WTC11 (cell line): ENCODE measurements at regions of chr2 and their contacts with region 1.

Region 1: GRCh38 chr2:208175069-208175839 is 11.9 kb upstream of the CRYGA start:
- DNase-seq: peak; percentile 76
- ATAC-seq: peak; percentile 98
- H3K4me3 Mint-ChIP-seq: no peak overlapping the region
- H3K27ac Mint-ChIP-seq: no peak overlapping the region
- H3K4me1 Mint-ChIP-seq: peaks cover 17% of the 10 kb centered on the region
- H3K27me3 Mint-ChIP-seq: no peaks in the 10 kb centered on the region
- CTCF ChIP-seq: peak; percentile 71

Region 2: GRCh38 chr2:208125251-208125650 is 50.0 kb before region 1 on chr2:
- CTCF ChIA-PET with region 1: interaction called, 13 read pairs
- POLR2A ChIA-PET with region 1: no interaction called
- DNase-seq: no peak
- ATAC-seq: no peak
- H3K4me3 Mint-ChIP-seq: no peak overlapping the region
- H3K27ac Mint-ChIP-seq: no peak overlapping the region
- H3K4me1 Mint-ChIP-seq: peaks cover 17% of the 10 kb centered on the region
- H3K27me3 Mint-ChIP-seq: no peaks in the 10 kb centered on the region; the same call in 1 of the 2 replicates
- CTCF ChIP-seq: no peak

Region 3: DNA sequence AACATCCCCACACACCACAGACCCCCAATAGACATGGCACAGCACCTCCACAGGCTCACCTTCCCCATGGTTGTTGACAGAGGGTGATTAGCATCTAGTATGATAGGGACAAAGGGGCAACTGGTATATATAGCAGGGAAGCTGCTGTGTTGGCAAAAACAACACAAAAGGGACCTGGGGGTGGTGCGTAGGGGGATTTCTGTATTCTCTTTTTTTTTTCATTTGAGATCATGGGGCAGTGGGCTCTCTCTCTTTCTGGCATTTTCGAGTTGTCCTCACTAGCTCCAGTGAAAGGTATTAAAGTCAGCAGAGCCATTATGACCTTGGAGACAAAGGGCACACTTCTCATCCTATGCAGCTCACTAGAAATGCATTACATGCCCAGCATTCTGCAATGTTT is 11.8 kb before region 1 on chr2 and contains the start of gene CRYGA:
- CTCF ChIA-PET with region 1: interaction called, 10 read pairs
- POLR2A ChIA-PET with region 1: no interaction called
- DNase-seq: no peak
- ATAC-seq: no peak
- H3K4me3 Mint-ChIP-seq: no peak within 1 kb of the TSS
- H3K27ac Mint-ChIP-seq: no peak within 1 kb of the TSS
- H3K4me1 Mint-ChIP-seq: peaks cover 12% of the 10 kb centered on the region
- H3K27me3 Mint-ChIP-seq: no peaks in the 10 kb centered on the region
- CTCF ChIP-seq: no peak
- total RNA-seq, gene CRYGA: not detected in 3 replicates

Region 4: GRCh38 chr2:208208335-208209085 is 33.3 kb after region 1 on chr2:
- CTCF ChIA-PET with region 1: interaction called, 10 read pairs
- POLR2A ChIA-PET with region 1: no interaction called
- DNase-seq: no peak
- ATAC-seq: no peak
- H3K4me3 Mint-ChIP-seq: no peak overlapping the region
- H3K27ac Mint-ChIP-seq: no peak overlapping the region
- H3K4me1 Mint-ChIP-seq: peaks cover 4% of the 10 kb centered on the region; the same call in 1 of the 2 replicates
- H3K27me3 Mint-ChIP-seq: no peaks in the 10 kb centered on the region
- CTCF ChIP-seq: no peak

Region 5: GRCh38 chr2:208440716-208441115 is 265.5 kb after region 1 on chr2:
- CTCF ChIA-PET with region 1: no interaction called
- POLR2A ChIA-PET with region 1: no interaction called
- DNase-seq: peak; percentile 15
- ATAC-seq: peak; percentile 79
- H3K4me3 Mint-ChIP-seq: no peak overlapping the region
- H3K27ac Mint-ChIP-seq: no peak overlapping the region
- H3K4me1 Mint-ChIP-seq: no peaks in the 10 kb centered on the region
- H3K27me3 Mint-ChIP-seq: no peaks in the 10 kb centered on the region; the same call in 1 of the 2 replicates
- CTCF ChIP-seq: no peak